OCI-LY7 (cell line): ENCODE measurements at regions of chr2 and their contacts with region 1.

Region 1: GRCh38 chr2:64644177-64645004 is 9.3 kb downstream of the SERTAD2 start:
- DNase-seq: peak; percentile 79
- H3K4me3 ChIP-seq: peak overlapping the region; percentile 67
- H3K27ac ChIP-seq: peak overlapping the region; percentile 88
- H3K4me1 ChIP-seq: peaks cover 100% of the 10 kb centered on the region
- CTCF ChIP-seq: no peak

Region 2: DNA sequence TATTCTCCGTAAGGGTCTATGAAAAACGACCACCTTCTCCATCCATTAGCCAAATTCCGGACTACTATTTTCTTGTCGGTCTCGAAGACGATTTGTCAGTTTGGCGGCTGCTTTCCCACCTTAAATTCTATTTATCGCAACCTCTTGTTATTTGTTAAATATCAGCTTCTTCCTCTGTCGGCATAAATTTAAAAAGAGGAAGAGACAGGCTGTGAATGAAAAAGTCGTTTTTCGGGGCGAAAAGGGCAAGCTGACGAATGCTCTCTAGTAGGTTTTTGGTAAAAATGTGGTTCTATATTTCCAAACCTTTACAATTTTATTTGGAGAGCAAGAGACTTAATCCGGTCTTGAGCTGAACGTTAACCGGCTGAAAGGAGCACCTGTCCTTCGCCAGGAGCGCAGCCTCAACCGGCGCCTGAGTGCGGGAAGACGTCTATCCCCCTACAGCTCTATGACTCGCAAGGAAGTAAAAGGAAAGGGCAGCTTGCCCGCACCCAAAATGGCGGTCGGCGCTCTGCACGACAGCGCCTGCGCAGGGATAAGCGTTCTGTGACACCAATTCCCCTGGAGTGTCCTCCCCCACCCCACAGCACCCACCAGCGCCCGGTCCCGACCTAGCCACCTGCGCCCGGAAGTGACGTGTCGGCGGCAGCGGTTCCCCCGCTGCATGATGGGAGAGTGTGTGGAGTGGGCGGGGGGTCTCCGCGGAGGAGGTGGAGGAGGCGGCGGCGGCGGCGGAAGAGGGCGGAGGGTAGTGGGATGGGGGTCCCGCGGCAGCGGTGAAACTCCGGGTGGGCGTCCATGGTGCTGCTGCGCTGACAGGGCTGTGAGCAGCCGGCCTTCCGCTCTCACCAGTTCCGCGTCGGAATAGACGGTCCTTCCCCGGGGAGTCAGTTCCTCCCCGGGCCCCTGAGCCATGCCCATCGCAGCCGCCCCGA is 120.5 kb before region 1 on chr2 and contains the start of gene AFTPH:
- CTCF ChIA-PET with region 1: interaction called, 3 read pairs
- POLR2A ChIA-PET with region 1: interaction called, 3 read pairs
- intact Hi-C with region 1: loop called (anchors 5 kb)
- DNase-seq: peak; percentile 99
- H3K4me3 ChIP-seq: peak within 1 kb of the TSS; percentile 84
- H3K27ac ChIP-seq: peak within 1 kb of the TSS; percentile 82
- H3K4me1 ChIP-seq: peaks cover 29% of the 10 kb centered on the region
- CTCF ChIP-seq: no peak
- total RNA-seq, gene AFTPH: 39.0 and 40.6 TPM in 2 replicates

Region 3: GRCh38 chr2:64586883-64587481 is 57.4 kb before region 1 on chr2:
- CTCF ChIA-PET with region 1: no interaction called
- POLR2A ChIA-PET with region 1: interaction called, 3 read pairs
- intact Hi-C with region 1: loop called (anchors 1 kb)
- DNase-seq: peak; percentile 65
- H3K4me3 ChIP-seq: no peak overlapping the region
- H3K27ac ChIP-seq: no peak overlapping the region
- H3K4me1 ChIP-seq: peaks cover 16% of the 10 kb centered on the region
- CTCF ChIP-seq: peak; percentile 93

Region 4: GRCh38 chr2:64622443-64623241 is 21.7 kb before region 1 on chr2:
- CTCF ChIA-PET with region 1: interaction called, 3 read pairs
- POLR2A ChIA-PET with region 1: interaction called, 13 read pairs
- intact Hi-C with region 1: no loop called
- DNase-seq: no peak
- H3K4me3 ChIP-seq: no peak overlapping the region
- H3K27ac ChIP-seq: no peak overlapping the region
- H3K4me1 ChIP-seq: peaks cover 17% of the 10 kb centered on the region
- CTCF ChIP-seq: no peak; the same call in 1 of the 2 replicates

Region 5: GRCh38 chr2:64831134-64831976 is 187.0 kb after region 1 on chr2:
- CTCF ChIA-PET with region 1: interaction called, 3 read pairs
- POLR2A ChIA-PET with region 1: interaction called, 5 read pairs
- intact Hi-C with region 1: loop called (anchors 1 kb)
- DNase-seq: peak; percentile 84
- H3K4me3 ChIP-seq: no peak overlapping the region
- H3K27ac ChIP-seq: no peak overlapping the region
- H3K4me1 ChIP-seq: peaks cover 6% of the 10 kb centered on the region
- CTCF ChIP-seq: peak; percentile 99

Region 6: DNA sequence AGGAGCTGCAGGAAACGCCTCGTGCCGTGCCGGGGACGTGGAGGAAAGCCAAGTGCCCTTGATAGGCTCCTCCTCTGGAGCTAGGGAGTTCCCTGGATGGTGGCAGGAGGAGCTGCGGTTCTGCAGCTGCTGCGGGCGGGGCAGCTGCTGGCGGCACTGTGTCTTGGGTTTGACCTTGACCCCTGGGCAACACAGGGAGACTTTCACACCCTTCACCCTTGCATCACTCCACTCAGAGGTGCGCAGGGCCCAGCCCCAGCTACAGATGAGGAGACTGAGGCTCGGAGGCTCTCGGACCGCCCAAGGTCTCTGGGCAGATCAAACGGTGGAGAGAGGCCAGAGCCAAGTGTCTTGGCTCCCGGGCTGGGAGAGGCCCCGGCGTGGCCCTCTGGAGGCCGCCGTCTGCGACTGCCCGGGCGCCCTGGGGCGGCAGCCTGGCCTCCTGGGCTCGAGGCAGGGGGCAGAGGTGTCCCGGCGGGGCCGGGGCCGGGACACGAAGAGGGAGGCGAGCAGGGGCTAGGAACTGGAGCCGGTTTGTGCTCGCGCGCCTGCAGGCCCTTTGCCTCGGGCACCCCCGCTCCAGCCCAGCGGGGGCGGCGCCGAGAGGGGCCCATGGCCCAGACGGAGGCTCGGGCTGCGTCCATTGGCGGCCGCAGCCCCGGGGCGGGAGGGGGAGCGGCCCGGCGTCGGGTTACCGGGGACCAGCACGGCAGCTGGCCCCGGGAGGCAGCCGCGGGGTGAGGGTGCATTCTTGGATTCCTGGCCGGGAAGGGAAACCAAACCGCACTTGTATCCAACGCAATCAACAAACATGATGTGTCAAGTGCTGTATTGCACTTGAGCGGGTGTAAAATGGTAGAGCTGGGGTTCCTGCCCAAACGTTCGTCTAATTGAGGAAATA is 215.2 kb after region 1 on chr2:
- CTCF ChIA-PET with region 1: no interaction called
- POLR2A ChIA-PET with region 1: interaction called, 3 read pairs
- intact Hi-C with region 1: loop called (anchors 1 kb)
- DNase-seq: no peak
- H3K4me3 ChIP-seq: peak overlapping the region; percentile 17
- H3K27ac ChIP-seq: peak overlapping the region; percentile 12
- H3K4me1 ChIP-seq: peaks cover 66% of the 10 kb centered on the region
- CTCF ChIP-seq: no peak

Region 7: DNA sequence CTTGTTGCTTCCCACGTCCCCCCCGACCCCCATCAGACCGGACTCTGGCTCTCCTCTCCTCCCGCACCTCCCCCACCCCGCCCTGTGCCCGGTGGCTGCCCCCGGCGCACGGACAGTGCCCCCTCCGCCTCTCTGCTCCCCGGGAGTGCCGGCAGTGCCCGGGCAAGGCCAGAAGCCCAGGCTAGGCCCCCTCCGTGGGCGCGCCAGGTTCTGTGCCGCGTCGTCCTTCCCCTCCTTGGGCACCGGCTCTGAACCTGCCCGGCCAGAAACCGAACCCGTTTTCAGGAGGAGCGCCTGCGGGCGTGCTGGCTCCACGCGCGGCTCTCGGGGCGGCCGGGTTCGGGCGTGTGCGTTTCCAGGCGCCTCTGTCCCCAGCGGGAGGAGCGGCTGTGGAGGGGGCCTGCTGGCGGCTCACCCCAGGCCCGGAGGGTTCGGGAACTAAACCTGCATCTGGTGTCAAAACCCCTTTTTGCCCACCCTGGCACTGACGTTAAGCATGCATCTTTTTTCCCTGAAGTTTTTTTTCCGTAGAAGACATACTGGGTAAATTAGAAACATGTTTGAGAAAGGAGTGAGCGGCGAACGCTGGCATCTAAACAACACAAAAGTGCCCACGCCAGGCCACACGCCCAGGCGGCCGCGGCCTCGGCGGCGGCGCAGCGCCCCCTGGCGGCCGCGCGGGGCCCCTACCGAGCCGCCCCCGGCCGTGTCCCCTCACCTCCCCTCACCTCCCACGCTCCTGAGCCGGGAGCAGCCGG is 220.9 kb after region 1 on chr2:
- CTCF ChIA-PET with region 1: no interaction called
- POLR2A ChIA-PET with region 1: interaction called, 3 read pairs
- intact Hi-C with region 1: loop called (anchors 1 kb)
- DNase-seq: peak; percentile 76
- H3K4me3 ChIP-seq: peak overlapping the region; percentile 69
- H3K27ac ChIP-seq: peak overlapping the region; percentile 20
- H3K4me1 ChIP-seq: peaks cover 54% of the 10 kb centered on the region
- CTCF ChIP-seq: peak; percentile 75